CD8-positive, alpha-beta T cell (primary cell): ENCODE measurements at regions of chr2 and their contacts with region 1.

Region 1: DNA sequence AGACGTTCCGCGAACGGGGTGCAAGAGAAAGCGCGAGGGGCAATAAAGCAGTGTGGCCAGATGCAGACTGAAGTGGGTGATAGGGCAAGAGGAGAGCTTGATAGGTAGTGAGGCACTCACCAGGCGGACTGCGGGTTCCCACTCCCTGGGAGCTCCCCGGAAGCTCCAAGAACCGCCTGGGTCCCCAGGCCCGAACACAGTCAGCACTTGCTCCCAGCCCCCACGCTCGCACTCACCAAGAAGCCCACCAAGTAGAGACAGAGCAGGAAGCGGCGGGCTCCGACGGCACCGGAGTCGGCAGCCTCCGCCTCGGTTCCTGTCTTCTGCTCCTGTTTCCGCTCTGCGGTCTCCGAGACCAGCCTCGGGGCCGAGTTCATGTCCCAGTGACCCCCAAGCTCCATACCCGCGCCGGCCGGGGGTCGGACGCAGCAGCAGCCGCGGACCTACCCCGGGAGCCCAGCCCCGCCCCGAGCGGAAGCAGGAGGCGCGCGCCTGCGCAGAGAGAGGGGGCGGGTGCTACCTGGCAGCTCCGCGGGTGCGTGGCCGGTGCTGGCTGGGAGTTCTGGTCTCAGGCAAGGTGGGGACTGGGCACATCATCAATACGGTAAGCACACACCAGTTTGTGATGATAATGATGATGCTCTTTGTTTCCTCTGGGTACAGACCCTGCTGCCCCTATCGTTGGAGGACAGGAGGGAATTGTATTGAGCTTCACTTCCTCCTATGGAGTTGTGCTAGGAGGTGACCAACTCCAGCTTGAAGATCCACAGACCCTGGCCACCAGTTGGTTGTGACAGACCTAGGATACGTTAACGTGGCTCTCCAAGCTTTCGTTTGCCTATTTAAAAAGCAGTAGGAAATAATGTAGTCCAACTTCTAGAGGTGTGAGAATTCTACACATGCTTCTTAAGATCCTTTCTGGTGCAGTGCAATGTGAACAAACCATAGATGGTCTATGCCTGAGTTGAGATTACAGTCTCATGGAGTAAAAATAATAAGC is 25.1 kb upstream of the TMEM182 start:
- DNase-seq: peak; percentile 64 to 90 (median 83)
- ATAC-seq: peak; percentile 90
- H3K4me3 ChIP-seq: peak overlapping the region; percentile 83 to 94
- H3K4me3 Mint-ChIP-seq: peak overlapping the region; percentile 93
- H3K27ac ChIP-seq: peak overlapping the region; percentile 51 to 61
- H3K27ac Mint-ChIP-seq: peak overlapping the region; percentile 89
- H3K4me1 ChIP-seq: peaks cover 23% of the 10 kb centered on the region
- H3K4me1 Mint-ChIP-seq: peaks cover 44% of the 10 kb centered on the region
- H3K27me3 ChIP-seq: no peaks in the 10 kb centered on the region
- H3K27me3 Mint-ChIP-seq: no peaks in the 10 kb centered on the region
- CTCF ChIP-seq: no peak

Region 2: GRCh38 chr2:101007415-101008345 is 1729.0 kb before region 1 on chr2:
- CTCF ChIA-PET with region 1: no interaction called
- POLR2A ChIA-PET with region 1: no interaction called
- intact Hi-C with region 1: loop called in 1 of 2 experiments (anchors 5 kb)
- DNase-seq: no peak
- ATAC-seq: no peak
- H3K4me3 ChIP-seq: no peak overlapping the region
- H3K4me3 Mint-ChIP-seq: no peak overlapping the region
- H3K27ac ChIP-seq: no peak overlapping the region
- H3K27ac Mint-ChIP-seq: peak overlapping the region; percentile 79
- H3K4me1 ChIP-seq: peaks cover 20% of the 10 kb centered on the region
- H3K4me1 Mint-ChIP-seq: peaks cover 57% of the 10 kb centered on the region
- H3K27me3 ChIP-seq: no peaks in the 10 kb centered on the region
- H3K27me3 Mint-ChIP-seq: no peaks in the 10 kb centered on the region
- CTCF ChIP-seq: no peak

Region 3: GRCh38 chr2:102103992-102104871 is 632.5 kb before region 1 on chr2:
- CTCF ChIA-PET with region 1: no interaction called
- POLR2A ChIA-PET with region 1: no interaction called
- intact Hi-C with region 1: no loop called
- DNase-seq: peak in 7 of 9 experiments; percentile 6 to 63 (median 37)
- ATAC-seq: peak; percentile 40
- H3K4me3 ChIP-seq: peak overlapping the region in 1 of 2 experiments; percentile 31
- H3K4me3 Mint-ChIP-seq: peak overlapping the region; percentile 73
- H3K27ac ChIP-seq: no peak overlapping the region
- H3K27ac Mint-ChIP-seq: no peak overlapping the region
- H3K4me1 ChIP-seq: no peaks in the 10 kb centered on the region
- H3K4me1 Mint-ChIP-seq: peaks cover 14% of the 10 kb centered on the region
- H3K27me3 ChIP-seq: no peaks in the 10 kb centered on the region
- H3K27me3 Mint-ChIP-seq: peaks cover 9% of the 10 kb centered on the region
- CTCF ChIP-seq: no peak